IMR-90 (cell line): ENCODE measurements at regions of chr7 and their contacts with region 1.

Region 1: DNA sequence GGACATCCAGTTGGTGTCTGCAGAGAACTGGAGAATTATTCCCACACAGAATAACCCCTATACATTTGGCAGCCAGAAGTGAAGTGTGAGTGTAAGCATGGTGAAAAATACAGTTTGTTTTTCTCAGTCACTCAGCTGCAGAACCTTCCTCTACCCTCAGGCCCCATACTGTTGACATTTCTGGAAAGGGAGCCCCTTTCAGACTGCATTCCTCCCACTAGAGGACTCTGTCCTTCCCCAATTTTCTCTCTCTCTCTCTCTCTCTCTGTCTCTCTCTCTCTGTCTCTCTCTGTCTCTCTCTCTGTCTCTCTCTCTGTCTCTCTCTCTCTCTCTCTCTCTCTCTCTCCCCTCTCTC is 86.8 kb upstream of the STEAP1B start:
- DNase-seq: peak; percentile 66
- ATAC-seq: peak; percentile 53; the same call in 1 of the 2 replicates
- H3K4me3 ChIP-seq: no peak overlapping the region
- H3K27ac ChIP-seq: no peak overlapping the region
- H3K4me1 ChIP-seq: peaks cover 22% of the 10 kb centered on the region
- H3K27me3 ChIP-seq: no peaks in the 10 kb centered on the region
- CTCF ChIP-seq: peak; percentile 56
- POLR2A ChIP-seq: no peak
- RAD21 ChIP-seq: peak; percentile 44

Region 2: DNA sequence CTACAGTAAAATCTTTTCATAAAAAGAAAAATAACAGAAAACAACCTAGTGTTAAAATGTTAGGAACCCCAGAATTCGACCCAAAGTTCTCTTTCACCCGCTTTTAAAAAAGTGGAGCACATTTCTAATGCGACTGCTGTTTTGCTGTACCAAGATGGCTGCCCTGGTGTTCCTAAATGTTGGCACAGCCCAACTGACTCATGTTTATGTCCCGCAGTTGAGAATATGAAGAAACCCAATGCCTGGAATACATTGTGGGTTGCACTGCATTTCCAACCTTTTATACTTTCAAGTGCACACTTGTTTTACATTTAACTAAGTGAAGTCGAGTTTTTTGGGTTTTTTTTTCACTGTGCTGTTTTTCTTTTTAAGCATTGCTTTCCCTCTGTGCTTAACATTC is 87.7 kb before region 1 on chr7:
- CTCF ChIA-PET with region 1: no interaction called
- POLR2A ChIA-PET with region 1: no interaction called
- dilution Hi-C with region 1: no loop called
- in situ Hi-C with region 1: no loop called
- intact Hi-C with region 1: no loop called
- DNase-seq: peak; percentile 21
- ATAC-seq: no peak
- H3K4me3 ChIP-seq: no peak overlapping the region
- H3K27ac ChIP-seq: no peak overlapping the region
- H3K4me1 ChIP-seq: 0 out of 2 replicates have a peak, but pooled peaks cover 2% of the 10 kb centered on the region
- H3K27me3 ChIP-seq: no peaks in the 10 kb centered on the region
- CTCF ChIP-seq: no peak
- POLR2A ChIP-seq: no peak
- RAD21 ChIP-seq: no peak

Region 3: GRCh38 chr7:22660732-22661131 is 74.0 kb after region 1 on chr7:
- CTCF ChIA-PET with region 1: no interaction called
- POLR2A ChIA-PET with region 1: no interaction called
- dilution Hi-C with region 1: no loop called
- in situ Hi-C with region 1: no loop called
- intact Hi-C with region 1: loop called (anchors 5 kb)
- DNase-seq: no peak
- ATAC-seq: no peak
- H3K4me3 ChIP-seq: no peak overlapping the region
- H3K27ac ChIP-seq: no peak overlapping the region
- H3K4me1 ChIP-seq: peaks cover 12% of the 10 kb centered on the region
- H3K27me3 ChIP-seq: no peaks in the 10 kb centered on the region
- CTCF ChIP-seq: no peak
- POLR2A ChIP-seq: no peak
- RAD21 ChIP-seq: no peak